Mammary epithelial cell (primary cell): ENCODE measurements at regions of chr22 and their contacts with region 1.

Region 1: DNA sequence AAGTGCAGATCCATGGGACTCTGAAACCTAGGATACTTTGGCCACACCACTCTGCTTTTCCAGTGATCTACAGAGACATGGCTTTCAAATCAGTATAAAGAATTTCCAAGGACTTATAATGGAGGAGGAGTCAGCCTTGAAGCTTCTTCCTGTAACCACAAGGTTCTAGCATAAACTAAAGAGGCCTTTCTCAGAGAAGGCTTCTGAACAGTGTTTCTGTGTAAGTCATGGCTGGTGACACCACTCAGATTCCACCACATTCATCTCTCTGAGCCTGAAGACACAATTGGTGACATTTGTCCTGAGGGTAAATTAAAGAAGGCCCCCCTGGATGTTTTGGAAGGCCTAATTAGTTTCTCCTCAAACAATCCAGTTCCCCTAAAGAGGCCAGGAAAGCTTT is 29.0 kb upstream of the ADORA2A start:
- DNase-seq: no peak
- H3K4me3 ChIP-seq: no peak overlapping the region
- H3K27ac ChIP-seq: no peak overlapping the region
- H3K4me1 ChIP-seq: peaks cover 11% of the 10 kb centered on the region
- H3K27me3 ChIP-seq: no peaks in the 10 kb centered on the region
- CTCF ChIP-seq: no peak

Region 2: DNA sequence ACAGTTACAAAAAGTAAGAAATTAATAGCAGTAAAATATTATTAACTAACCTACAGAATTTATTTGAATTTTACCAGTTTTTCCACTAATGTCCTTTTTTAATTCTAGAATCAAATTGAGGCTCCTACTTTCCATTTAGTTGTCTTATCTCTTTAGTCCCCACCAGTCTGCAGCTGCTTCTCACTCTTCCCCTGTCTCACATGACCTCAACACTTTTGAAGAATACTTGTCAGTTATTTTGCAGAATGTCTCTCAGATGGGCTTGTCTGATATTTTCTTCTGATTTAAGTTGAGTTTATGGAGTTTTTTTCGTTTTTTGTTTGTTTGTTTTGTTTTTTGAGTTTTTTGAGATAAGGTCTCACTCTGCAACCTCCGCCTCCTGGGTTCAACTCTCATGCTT is 45.3 kb before region 1 on chr22:
- CTCF ChIA-PET with region 1: no interaction called
- dilution Hi-C with region 1: loop called (anchors 5 kb)
- in situ Hi-C with region 1: no loop called
- intact Hi-C with region 1: no loop called
- DNase-seq: no peak
- H3K4me3 ChIP-seq: no peak overlapping the region
- H3K27ac ChIP-seq: no peak overlapping the region
- H3K4me1 ChIP-seq: peaks cover 6% of the 10 kb centered on the region
- H3K27me3 ChIP-seq: no peaks in the 10 kb centered on the region
- CTCF ChIP-seq: no peak